Activated B cell treated with CpG ODN at 0.5 μM for 24 hours (primary cell): ENCODE measurements at regions of chr14 and their contacts with region 1.

Region 1: DNA sequence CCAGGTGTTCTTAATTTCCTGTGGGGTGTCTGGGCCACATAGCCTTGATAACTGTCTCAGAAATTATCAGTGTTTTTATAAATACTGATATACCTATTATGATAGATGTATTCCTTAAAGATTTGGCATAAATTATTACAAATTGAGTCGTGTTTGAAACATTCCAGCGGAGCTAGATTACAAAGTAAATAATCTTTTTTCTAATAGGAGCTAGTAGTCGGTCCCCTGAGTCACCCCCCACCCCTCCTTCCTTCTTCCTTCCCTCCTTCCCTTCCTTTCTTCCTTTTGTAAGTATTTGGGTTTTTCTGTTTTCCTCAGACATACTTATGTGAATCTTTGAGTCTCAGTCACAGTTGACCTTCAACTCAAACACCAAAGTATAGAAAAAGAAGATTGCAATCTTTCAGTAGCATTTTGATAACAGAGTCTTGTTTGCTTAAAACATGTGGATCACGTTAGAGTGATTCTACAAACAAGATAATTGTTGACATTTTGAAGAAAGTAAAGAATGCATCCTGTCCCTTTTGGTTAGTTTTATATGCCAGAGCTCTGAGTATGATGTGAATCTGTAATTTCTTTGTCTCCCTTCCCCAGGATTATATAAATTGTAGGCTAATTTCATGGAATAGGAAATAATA is 263.9 kb downstream of the FUT8 start:
- DNase-seq: no peak
- ATAC-seq: no peak
- H3K4me3 Mint-ChIP-seq: no peak overlapping the region
- H3K27ac Mint-ChIP-seq: no peak overlapping the region
- H3K4me1 Mint-ChIP-seq: peaks cover 7% of the 10 kb centered on the region
- H3K27me3 Mint-ChIP-seq: no peaks in the 10 kb centered on the region
- CTCF ChIP-seq: no peak

Region 2: DNA sequence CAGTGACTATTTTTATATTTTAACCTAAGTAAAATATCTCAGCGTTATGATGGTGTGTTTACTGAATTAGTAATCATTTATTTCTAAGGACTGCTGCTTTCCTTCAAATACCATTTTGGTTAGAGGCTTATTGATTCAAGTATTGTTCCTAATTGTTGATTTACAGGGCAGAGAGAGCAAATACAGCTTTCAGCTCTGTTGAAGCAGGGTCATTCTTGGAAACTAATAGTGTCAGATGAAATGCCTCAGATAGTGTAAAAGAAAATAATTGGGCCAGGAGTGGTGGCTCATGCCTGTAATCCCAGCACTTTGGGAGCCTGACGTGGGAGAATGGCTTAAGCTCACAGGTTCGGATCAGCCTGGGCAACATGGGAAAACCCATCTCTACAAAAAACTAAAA is 14.6 kb before region 1 on chr14:
- CTCF ChIA-PET with region 1: no interaction called
- POLR2A ChIA-PET with region 1: no interaction called
- intact Hi-C with region 1: no loop called
- DNase-seq: no peak
- ATAC-seq: no peak
- H3K4me3 Mint-ChIP-seq: no peak overlapping the region
- H3K27ac Mint-ChIP-seq: peak overlapping the region; percentile 30
- H3K4me1 Mint-ChIP-seq: peaks cover 7% of the 10 kb centered on the region
- H3K27me3 Mint-ChIP-seq: no peaks in the 10 kb centered on the region
- CTCF ChIP-seq: no peak

Region 3: GRCh38 chr14:65704850-65705249 is 28.4 kb after region 1 on chr14:
- CTCF ChIA-PET with region 1: no interaction called
- POLR2A ChIA-PET with region 1: no interaction called
- intact Hi-C with region 1: loop called (anchors 5 kb)
- DNase-seq: no peak
- ATAC-seq: peak; percentile 61
- H3K4me3 Mint-ChIP-seq: no peak overlapping the region
- H3K27ac Mint-ChIP-seq: peak overlapping the region; percentile 27
- H3K4me1 Mint-ChIP-seq: no peaks in the 10 kb centered on the region
- H3K27me3 Mint-ChIP-seq: no peaks in the 10 kb centered on the region
- CTCF ChIP-seq: no peak